GM10248 (cell line): ENCODE measurements at regions of chr9 and their contacts with region 1.

Region 1: DNA sequence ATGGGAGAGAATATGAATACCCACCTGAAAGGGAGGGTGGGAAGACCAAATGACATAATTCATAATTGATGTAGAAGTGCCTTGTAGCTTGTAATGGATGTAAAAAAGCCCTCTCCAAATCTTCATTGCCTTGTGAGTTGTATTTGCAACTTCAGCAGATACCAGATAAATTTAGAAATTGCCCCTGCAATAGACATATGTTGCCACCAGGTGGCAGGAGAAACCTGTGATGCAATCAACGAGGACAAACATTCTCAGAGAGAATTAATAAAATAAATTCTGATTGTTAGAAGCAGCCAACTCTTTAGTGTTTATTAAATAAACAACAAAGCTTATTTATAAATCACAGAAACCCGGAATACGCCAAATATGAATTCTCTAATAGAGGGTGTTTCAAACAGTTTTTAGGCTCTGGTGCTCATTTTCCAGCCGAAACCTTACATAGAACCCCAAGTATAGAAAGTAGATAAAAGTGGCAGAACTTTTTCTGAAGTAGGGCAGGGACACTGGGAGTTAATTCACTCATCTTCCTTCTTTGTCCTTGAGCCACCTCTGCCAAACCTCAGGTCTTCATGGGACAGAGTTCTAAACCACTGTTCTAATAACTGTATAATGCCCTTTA is 147.8 kb downstream of the TMEM38B start:
- DNase-seq: peak; percentile 50
- CTCF ChIP-seq: peak; percentile 68

Region 2: GRCh38 chr9:105828596-105829213 is 13.4 kb before region 1 on chr9:
- CTCF ChIA-PET with region 1: interaction called, 16 read pairs
- POLR2A ChIA-PET with region 1: no interaction called
- DNase-seq: no peak
- CTCF ChIP-seq: no peak

Region 3: GRCh38 chr9:105858006-105858690 is 16.0 kb after region 1 on chr9:
- CTCF ChIA-PET with region 1: interaction called, 38 read pairs
- POLR2A ChIA-PET with region 1: no interaction called
- DNase-seq: no peak
- CTCF ChIP-seq: no peak

Region 4: GRCh38 chr9:105881654-105882349 is 39.7 kb after region 1 on chr9:
- CTCF ChIA-PET with region 1: interaction called, 90 read pairs
- POLR2A ChIA-PET with region 1: no interaction called
- DNase-seq: peak; percentile 57
- CTCF ChIP-seq: peak; percentile 95

Region 5: GRCh38 chr9:105984714-105985113 is 142.6 kb after region 1 on chr9:
- CTCF ChIA-PET with region 1: no interaction called
- POLR2A ChIA-PET with region 1: no interaction called
- DNase-seq: no peak
- CTCF ChIP-seq: no peak

Region 6: GRCh38 chr9:107172160-107172978 is 1330.2 kb after region 1 on chr9:
- CTCF ChIA-PET with region 1: interaction called, 30 read pairs
- POLR2A ChIA-PET with region 1: no interaction called
- DNase-seq: peak; percentile 57
- CTCF ChIP-seq: peak; percentile 82